Activated T-helper 1 cell treated with anti-CD3 and anti-CD28 coated beads, Interleukin-12 subunit alpha, Interleukin-12 subunit beta, Interleukin-2, Interleukin-4 antibody, amounts not matched to agents 30 ng/mL and 10 ng/mL and 1 ng/mL, durations not matched to agents 14 hours and 24 hours and 36 hours (primary cell): ENCODE measurements at regions of chrX and their contacts with region 1.

Region 1: DNA sequence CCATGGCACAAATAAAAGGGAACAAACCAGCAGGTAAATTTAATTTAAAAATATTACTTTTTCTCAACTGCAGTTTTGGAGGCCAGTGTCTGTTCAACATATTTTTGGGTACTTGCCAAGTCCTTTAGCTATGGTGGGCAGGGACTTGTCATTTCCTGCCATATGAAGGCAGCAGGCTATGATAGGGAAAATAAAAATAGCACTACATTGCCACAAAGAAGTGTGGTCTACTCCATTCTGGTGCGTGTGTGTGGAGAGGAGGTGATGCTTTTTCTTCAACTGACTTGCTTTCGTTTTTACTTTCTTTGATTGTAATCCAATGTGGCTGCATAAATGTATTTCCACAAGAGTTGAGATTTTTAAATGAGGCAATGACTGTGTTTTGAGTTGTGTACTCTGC is 17.2 kb downstream of the GPR174 start:
- DNase-seq: peak; percentile 48
- H3K4me3 Mint-ChIP-seq: peak overlapping the region; percentile 89
- H3K27ac Mint-ChIP-seq: peak overlapping the region; percentile 99
- H3K4me1 Mint-ChIP-seq: peaks cover 53% of the 10 kb centered on the region
- H3K27me3 Mint-ChIP-seq: no peaks in the 10 kb centered on the region

Region 2: DNA sequence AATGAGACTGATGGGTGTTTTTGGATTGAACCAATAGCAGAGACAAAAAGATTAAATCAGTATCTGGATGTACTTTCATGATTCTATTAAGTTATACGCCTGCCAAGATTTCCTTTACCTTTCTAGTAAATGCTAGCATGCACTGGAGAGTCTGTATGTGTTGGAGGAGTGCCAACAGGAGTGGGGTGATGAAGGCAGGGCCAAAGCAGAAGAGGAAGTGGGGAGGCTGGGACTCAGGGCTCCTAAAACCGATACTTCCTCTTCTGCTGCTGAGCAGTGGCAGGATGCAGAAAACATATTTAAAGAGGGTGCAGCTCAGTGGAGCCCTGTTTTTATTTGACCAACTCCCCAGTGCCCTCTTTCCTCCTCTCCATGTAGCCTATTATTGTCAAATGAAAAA is 839.8 kb before region 1 on chrX:
- intact Hi-C with region 1: loop called (anchors 5 kb)
- DNase-seq: peak; percentile 31
- H3K4me3 Mint-ChIP-seq: peak overlapping the region; percentile 64
- H3K27ac Mint-ChIP-seq: peak overlapping the region; percentile 89
- H3K4me1 Mint-ChIP-seq: peaks cover 41% of the 10 kb centered on the region
- H3K27me3 Mint-ChIP-seq: no peaks in the 10 kb centered on the region

Region 3: GRCh38 chrX:79182616-79183015 is 21.0 kb after region 1 on chrX:
- intact Hi-C with region 1: loop called (anchors 1 kb)
- DNase-seq: no peak
- H3K4me3 Mint-ChIP-seq: peak overlapping the region; percentile 72
- H3K27ac Mint-ChIP-seq: peak overlapping the region; percentile 81
- H3K4me1 Mint-ChIP-seq: peaks cover 52% of the 10 kb centered on the region
- H3K27me3 Mint-ChIP-seq: no peaks in the 10 kb centered on the region

Region 4: DNA sequence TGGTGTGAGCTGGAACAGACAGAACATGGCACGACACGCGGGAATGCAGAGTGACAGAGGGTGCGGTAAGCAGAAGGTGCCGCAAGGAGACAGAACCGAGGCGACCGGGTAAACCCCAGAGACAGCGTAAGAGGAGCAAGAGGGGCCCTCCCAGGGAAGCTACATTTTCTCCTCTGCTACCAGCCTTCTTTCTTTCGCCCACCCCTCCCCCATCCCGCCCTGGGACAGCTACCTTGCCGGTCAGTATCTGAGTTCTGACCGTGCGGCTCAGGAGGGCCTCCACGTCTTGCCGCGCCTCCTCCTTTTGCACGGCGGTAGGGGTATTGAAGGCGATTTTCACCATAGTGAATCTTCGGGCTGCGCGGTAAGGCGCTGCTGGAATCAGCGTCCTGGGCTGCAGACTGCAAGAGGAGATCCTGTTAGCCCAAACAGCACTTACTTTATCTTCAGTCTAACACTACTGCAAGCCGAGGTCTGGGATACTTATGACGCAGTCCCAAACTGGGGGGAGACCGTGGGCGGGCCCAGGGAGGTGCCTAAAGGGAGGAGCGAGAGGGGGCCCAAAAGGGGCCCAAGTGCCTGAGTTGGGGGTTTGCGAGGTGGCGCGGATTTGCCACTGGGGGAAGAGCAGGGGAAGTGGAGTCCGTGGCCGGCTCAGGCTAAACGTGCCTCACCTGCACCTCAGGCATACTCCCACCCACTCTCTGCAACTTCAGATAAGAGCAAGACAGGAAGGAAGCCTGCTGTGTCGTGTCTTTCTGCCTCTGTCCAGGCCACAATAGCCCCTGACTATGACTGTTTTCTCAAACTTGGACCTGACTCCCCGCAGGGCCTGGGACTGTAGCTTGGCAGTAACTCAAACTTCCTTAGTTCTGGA is 205.5 kb after region 1 on chrX and contains the start of gene ITM2A:
- intact Hi-C with region 1: loop called (anchors 5 kb)
- DNase-seq: peak; percentile 37
- H3K4me3 Mint-ChIP-seq: peak within 1 kb of the TSS; percentile 94
- H3K27ac Mint-ChIP-seq: peak within 1 kb of the TSS; percentile 95
- H3K4me1 Mint-ChIP-seq: peaks cover 35% of the 10 kb centered on the region
- H3K27me3 Mint-ChIP-seq: no peaks in the 10 kb centered on the region
- total RNA-seq, gene ITM2A: 114 and 116 TPM in 2 replicates

Region 5: GRCh38 chrX:80229626-80230025 is 1068.0 kb after region 1 on chrX:
- intact Hi-C with region 1: no loop called
- DNase-seq: no peak
- H3K4me3 Mint-ChIP-seq: no peak overlapping the region
- H3K27ac Mint-ChIP-seq: no peak overlapping the region
- H3K4me1 Mint-ChIP-seq: no peaks in the 10 kb centered on the region
- H3K27me3 Mint-ChIP-seq: no peaks in the 10 kb centered on the region